ENCODE measurements at regions of chr9 and their contacts with region 1.

Region 1: GRCh38 chr9:36572515-36573418 is at the start of gene MELK:
- DNase-seq: peak; percentile 52 to 60 (median 56)
- H3K4me3 ChIP-seq: peak within 1 kb of the TSS; percentile 98 to 100 (median 98)
- H3K4me3 Mint-ChIP-seq: peak within 1 kb of the TSS; percentile 92 to 94
- H3K27ac ChIP-seq: peak within 1 kb of the TSS; percentile 25 to 77
- H3K27ac Mint-ChIP-seq: peak within 1 kb of the TSS; percentile 70 to 91 (median 81)
- H3K4me1 ChIP-seq: peaks cover 14 to 23% of the 10 kb centered on the region in 2 donors
- H3K4me1 Mint-ChIP-seq: peaks cover 34% of the 10 kb centered on the region
- H3K27me3 ChIP-seq: no peaks in the 10 kb centered on the region
- H3K27me3 Mint-ChIP-seq: peaks cover 1 to 4% (median 2%) of the 10 kb centered on the region in 3 donors
- CTCF ChIP-seq: no peak
- polyA plus RNA-seq, gene MELK: 0.08 TPM in 1 of 3 donors, not detected in the others

Region 2: GRCh38 chr9:36400332-36401163 is 172.2 kb before region 1 on chr9:
- intact Hi-C with region 1: loop called (anchors 5 kb)
- DNase-seq: peak; percentile 81 to 86 (median 85)
- H3K4me3 ChIP-seq: peak overlapping the region; percentile 66 to 91 (median 84)
- H3K4me3 Mint-ChIP-seq: peak overlapping the region; percentile 90 to 91
- H3K27ac ChIP-seq: peak overlapping the region; percentile 75 to 91
- H3K27ac Mint-ChIP-seq: peak overlapping the region; percentile 88 to 97 (median 96)
- H3K4me1 ChIP-seq: peaks cover 24 to 25% of the 10 kb centered on the region in 2 donors
- H3K4me1 Mint-ChIP-seq: peaks cover 34% of the 10 kb centered on the region
- H3K27me3 ChIP-seq: no peaks in the 10 kb centered on the region
- H3K27me3 Mint-ChIP-seq: no peaks in the 10 kb centered on the region
- CTCF ChIP-seq: no peak

Region 3: GRCh38 chr9:36407122-36407723 is 165.5 kb before region 1 on chr9:
- intact Hi-C with region 1: loop called (anchors 5 kb)
- DNase-seq: peak; percentile 46 to 67 (median 65)
- H3K4me3 ChIP-seq: no peak overlapping the region
- H3K4me3 Mint-ChIP-seq: no peak overlapping the region
- H3K27ac ChIP-seq: peak overlapping the region in 1 of 2 donors; percentile 44
- H3K27ac Mint-ChIP-seq: peak overlapping the region in 5 of 7 donors; percentile 19 to 82 (median 60)
- H3K4me1 ChIP-seq: no peaks in the 10 kb centered on the region
- H3K4me1 Mint-ChIP-seq: peaks cover 1% of the 10 kb centered on the region
- H3K27me3 ChIP-seq: no peaks in the 10 kb centered on the region
- H3K27me3 Mint-ChIP-seq: peaks cover 0 to 2% (median 0%) of the 10 kb centered on the region in 3 donors
- CTCF ChIP-seq: peak; percentile 92

Region 4: DNA sequence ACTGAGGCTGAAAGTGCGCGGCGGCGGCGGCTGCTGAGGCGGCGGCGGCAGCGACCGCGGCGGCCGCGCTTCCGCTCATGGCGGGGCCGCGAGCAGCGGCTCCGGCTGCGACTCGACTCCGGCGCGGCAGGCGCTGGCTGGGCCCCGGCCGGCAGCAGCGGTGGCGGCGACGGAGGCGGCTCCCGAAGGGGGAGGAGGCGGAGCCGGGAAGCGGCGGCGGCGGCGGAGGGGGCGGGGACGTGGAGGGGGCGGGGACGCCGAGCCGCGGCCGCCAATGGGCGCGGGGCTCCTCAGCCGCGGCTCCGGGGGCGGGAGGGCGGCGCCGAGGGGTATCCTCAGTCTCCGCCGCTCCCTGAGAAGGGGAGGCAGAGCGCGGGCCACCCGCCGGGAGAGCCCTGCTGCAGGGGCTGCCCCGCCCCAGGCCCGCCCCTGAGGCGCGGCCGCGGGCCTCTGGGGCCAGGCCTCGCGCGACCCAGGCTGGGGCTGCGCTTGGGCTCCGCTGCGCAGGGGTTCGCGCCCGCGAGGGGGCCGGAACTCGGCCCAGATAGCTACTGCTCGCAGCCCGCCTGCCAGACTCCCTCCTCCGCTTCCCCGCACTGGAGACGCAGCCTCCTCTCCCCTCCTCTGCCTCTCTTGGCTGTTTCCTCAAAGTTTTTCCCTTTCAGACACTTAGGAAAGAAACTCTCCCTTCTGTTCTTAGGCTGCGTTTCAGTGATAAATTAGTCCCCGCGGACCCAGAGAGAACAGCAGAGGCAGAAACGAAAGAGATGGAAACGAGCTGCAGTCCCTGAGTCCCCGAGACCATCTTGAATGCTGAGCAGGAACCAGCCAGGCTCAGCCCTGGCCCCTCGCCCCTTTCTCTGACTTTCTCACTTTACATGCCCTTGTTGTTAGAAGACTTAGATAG is 85.0 kb before region 1 on chr9:
- intact Hi-C with region 1: loop called in 1 of 2 experiments (anchors 5 kb)
- DNase-seq: peak; percentile 81 to 85 (median 82)
- H3K4me3 ChIP-seq: peak overlapping the region; percentile 60 to 98 (median 80)
- H3K4me3 Mint-ChIP-seq: peak overlapping the region; percentile 95
- H3K27ac ChIP-seq: peak overlapping the region; percentile 90 to 91
- H3K27ac Mint-ChIP-seq: peak overlapping the region; percentile 93 to 96 (median 94)
- H3K4me1 ChIP-seq: peaks cover 23 to 28% of the 10 kb centered on the region in 2 donors
- H3K4me1 Mint-ChIP-seq: peaks cover 37% of the 10 kb centered on the region
- H3K27me3 ChIP-seq: no peaks in the 10 kb centered on the region
- H3K27me3 Mint-ChIP-seq: peaks cover 0 to 4% (median 1%) of the 10 kb centered on the region in 3 donors
- CTCF ChIP-seq: no peak

Region 5: GRCh38 chr9:36530224-36530623 is 42.5 kb before region 1 on chr9:
- intact Hi-C with region 1: no loop called
- DNase-seq: no peak
- H3K4me3 ChIP-seq: no peak overlapping the region
- H3K4me3 Mint-ChIP-seq: no peak overlapping the region
- H3K27ac ChIP-seq: no peak overlapping the region
- H3K27ac Mint-ChIP-seq: no peak overlapping the region
- H3K4me1 ChIP-seq: no peaks in the 10 kb centered on the region
- H3K4me1 Mint-ChIP-seq: no peaks in the 10 kb centered on the region
- H3K27me3 ChIP-seq: no peaks in the 10 kb centered on the region
- H3K27me3 Mint-ChIP-seq: peaks cover 0 to 6% (median 0%) of the 10 kb centered on the region in 3 donors
- CTCF ChIP-seq: no peak

Measured in CD14-positive monocyte (primary cell).